T-cell (primary cell): ENCODE measurements at regions of chr3 and their contacts with region 1.

Region 1: DNA sequence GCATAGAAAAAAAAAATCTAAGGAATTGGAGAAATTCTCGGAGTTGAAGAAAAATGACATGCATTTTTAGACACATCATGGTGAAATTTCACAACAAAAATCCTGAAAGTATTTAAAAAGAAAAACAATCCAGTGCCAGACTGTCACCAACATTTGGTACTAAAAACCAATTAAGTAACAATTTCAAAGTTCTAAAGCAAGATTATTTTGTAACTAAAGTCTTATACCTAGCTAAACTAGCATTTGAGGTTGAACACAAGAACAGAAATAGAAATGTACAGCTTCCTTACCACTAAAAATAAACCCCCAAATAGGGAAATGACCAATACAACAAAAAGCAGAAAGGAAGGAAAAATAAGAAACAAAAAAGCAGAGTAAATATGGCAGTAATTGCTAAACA is 11.9 kb downstream of the TOMM70 start:
- DNase-seq: no peak
- ATAC-seq: no peak
- H3K4me3 ChIP-seq: no peak overlapping the region
- H3K4me3 Mint-ChIP-seq: no peak overlapping the region
- H3K27ac ChIP-seq: no peak overlapping the region
- H3K27ac Mint-ChIP-seq: no peak overlapping the region
- H3K4me1 ChIP-seq: peaks cover 0 to 3% of the 10 kb centered on the region in 2 experiments
- H3K4me1 Mint-ChIP-seq: peaks cover 32 to 37% (median 32%) of the 10 kb centered on the region in 3 donors
- H3K27me3 ChIP-seq: no peaks in the 10 kb centered on the region
- H3K27me3 Mint-ChIP-seq: no peaks in the 10 kb centered on the region

Region 2: GRCh38 chr3:98728672-98729071 is 1660.4 kb before region 1 on chr3:
- CTCF ChIA-PET with region 1: no interaction called
- POLR2A ChIA-PET with region 1: interaction called in 1 of 2 experiments, 11 read pairs
- DNase-seq: no peak
- ATAC-seq: no peak
- H3K4me3 ChIP-seq: no peak overlapping the region
- H3K4me3 Mint-ChIP-seq: no peak overlapping the region
- H3K27ac ChIP-seq: no peak overlapping the region
- H3K27ac Mint-ChIP-seq: no peak overlapping the region
- H3K4me1 ChIP-seq: peaks cover 4 to 17% of the 10 kb centered on the region in 2 experiments
- H3K4me1 Mint-ChIP-seq: peaks cover 7 to 12% (median 10%) of the 10 kb centered on the region in 3 donors
- H3K27me3 ChIP-seq: peaks cover 0 to 27% of the 10 kb centered on the region in 2 experiments
- H3K27me3 Mint-ChIP-seq: peaks cover 34 to 43% of the 10 kb centered on the region in 2 donors